Common myeloid progenitor, CD34-positive (primary cell): ENCODE measurements at regions of chr15 and their contacts with region 1.

Region 1: DNA sequence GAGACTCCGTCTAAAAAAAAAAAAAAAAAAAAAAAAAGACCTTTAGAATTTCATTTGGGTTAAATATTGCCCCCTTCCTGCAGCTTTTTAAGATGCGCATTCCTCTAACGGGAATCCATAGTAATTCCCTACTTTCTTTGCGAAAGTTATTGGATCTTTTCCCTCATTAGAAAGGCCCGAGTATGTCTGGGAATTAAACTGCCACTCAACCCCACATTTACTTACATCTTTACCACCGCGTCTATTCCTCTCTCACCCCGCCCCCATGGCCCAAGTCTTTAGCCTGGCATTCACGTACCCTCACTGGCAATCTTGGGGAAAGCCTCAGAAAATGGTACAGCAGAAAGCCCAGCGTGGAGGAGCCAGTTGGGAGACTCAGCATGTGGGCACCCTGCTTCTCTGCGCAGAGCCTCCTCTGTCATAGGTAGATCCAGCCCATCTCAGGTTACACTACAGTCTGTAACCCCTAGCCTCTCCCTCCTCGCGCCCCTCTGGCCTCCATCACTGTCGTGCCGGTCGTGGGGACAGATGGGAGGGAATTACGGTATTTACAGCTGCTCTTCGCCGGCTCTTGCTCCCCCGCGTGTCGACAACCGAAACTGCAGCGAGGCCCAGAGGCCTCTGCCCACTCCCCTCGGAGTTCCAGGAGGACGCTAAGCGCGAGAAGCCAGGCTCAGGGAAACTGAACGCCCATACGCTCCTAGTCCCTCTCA is 6.4 kb upstream of the ANKDD1A start:
- DNase-seq: peak; percentile 81 to 86 (median 86)
- H3K4me3 ChIP-seq: peak overlapping the region in 4 of 7 experiments; percentile 55 to 73 (median 63)
- H3K27ac ChIP-seq: no peak overlapping the region
- H3K4me1 ChIP-seq: peaks cover 3 to 10% (median 6%) of the 10 kb centered on the region in 4 experiments
- H3K27me3 ChIP-seq: peaks cover 0 to 1% (median 0%) of the 10 kb centered on the region in 5 experiments

Region 2: GRCh38 chr15:64809649-64810496 is 95.4 kb before region 1 on chr15:
- CTCF ChIA-PET with region 1: interaction called, 10 read pairs
- POLR2A ChIA-PET with region 1: no interaction called
- DNase-seq: peak; percentile 61 to 65 (median 64)
- H3K4me3 ChIP-seq: no peak overlapping the region
- H3K27ac ChIP-seq: no peak overlapping the region
- H3K4me1 ChIP-seq: peaks cover 0 to 9% (median 2%) of the 10 kb centered on the region in 4 experiments
- H3K27me3 ChIP-seq: peaks cover 0 to 3% (median 0%) of the 10 kb centered on the region in 5 experiments

Region 3: GRCh38 chr15:64836023-64836536 is 69.2 kb before region 1 on chr15:
- CTCF ChIA-PET with region 1: interaction called, 12 read pairs
- POLR2A ChIA-PET with region 1: interaction called, 6 read pairs
- DNase-seq: no peak
- H3K4me3 ChIP-seq: peak overlapping the region in 3 of 7 experiments; percentile 29 to 42 (median 40)
- H3K27ac ChIP-seq: peak overlapping the region in 1 of 2 experiments; percentile 25
- H3K4me1 ChIP-seq: peaks cover 7 to 51% (median 24%) of the 10 kb centered on the region in 4 experiments
- H3K27me3 ChIP-seq: no peaks in the 10 kb centered on the region

Region 4: DNA sequence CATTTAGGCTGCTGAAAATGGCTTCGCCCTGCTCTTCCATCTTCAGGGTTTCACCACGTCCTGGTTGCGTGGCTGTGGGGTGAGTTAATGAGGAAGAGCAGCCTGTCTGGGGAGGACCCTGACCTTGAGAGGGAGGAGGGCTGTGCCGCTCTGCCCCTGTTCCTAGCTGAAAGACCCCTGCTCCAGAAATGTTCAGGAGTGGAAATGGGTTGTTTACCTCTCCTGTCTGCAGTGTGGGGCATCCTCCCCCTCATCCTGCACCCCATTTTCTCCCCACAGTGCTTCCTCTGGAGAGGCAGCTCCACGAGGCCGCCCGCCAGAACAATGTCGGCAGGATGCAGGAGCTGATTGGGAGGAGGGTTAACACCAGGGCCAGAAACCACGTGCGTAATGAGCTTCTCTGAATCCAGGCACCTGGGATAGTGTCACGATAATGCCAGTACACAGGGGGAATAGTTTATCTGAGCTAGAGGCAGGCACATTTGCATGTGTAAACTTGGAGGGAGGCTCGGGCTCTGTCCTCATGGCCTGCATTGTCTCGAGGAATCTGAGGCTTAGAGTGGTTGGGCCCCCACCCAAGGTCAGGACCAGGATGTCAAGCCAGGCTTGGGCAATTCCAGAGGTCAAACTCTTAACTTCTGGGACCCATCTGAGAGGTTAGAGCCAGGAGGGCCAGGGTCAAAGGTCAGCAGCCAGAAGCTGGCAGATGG is 10.4 kb after region 1 on chr15:
- CTCF ChIA-PET with region 1: interaction called, 10 read pairs
- POLR2A ChIA-PET with region 1: no interaction called
- DNase-seq: no peak
- H3K4me3 ChIP-seq: no peak overlapping the region
- H3K27ac ChIP-seq: no peak overlapping the region
- H3K4me1 ChIP-seq: peaks cover 0 to 37% (median 24%) of the 10 kb centered on the region in 4 experiments
- H3K27me3 ChIP-seq: peaks cover 0 to 9% (median 4%) of the 10 kb centered on the region in 5 experiments